ENCODE measurements at regions of chr5 and their contacts with region 1.

Region 1: DNA sequence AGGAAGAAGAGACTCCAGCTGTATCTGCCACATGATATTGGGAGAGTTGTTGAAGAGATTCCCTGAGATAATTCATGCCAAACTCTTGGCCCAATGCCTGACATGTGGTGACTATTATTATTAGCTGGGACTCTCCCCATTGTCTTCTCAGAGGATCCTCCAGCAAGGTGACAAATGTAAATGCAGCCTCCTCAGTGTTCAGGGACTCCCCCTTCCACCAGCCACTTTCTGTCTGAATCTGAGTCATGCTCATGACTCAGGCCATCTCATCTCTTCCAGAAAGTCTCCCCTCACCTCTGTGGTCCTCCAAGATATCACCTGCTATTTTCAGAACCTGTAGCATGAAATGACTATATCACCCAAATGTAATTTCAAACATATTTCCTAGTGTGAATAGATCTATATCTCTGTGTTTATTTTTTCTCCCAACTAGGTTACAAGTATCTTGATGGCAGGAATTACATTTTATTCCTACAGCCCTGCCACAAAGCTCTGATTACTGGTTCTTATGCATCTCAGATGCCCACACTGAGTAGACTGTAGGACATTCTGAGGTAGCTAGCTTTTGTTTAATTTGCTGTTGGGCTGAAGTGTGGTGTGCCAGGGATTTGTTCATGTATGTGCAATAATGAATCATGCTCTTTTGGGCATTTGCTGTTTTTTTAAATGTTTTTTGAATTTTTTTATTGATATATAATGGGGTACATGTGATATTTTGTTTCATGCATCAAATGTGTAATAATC is 126.6 kb upstream of the IL12B start:
- DNase-seq: peak; percentile 82
- ATAC-seq: peak; percentile 84
- H3K4me3 Mint-ChIP-seq: no peak overlapping the region
- H3K27ac Mint-ChIP-seq: no peak overlapping the region
- H3K4me1 Mint-ChIP-seq: peaks cover 45% of the 10 kb centered on the region
- H3K27me3 Mint-ChIP-seq: peaks cover 37% of the 10 kb centered on the region

Region 2: GRCh38 chr5:157858527-157859226 is 1598.2 kb before region 1 on chr5 and contains the start of gene CLINT1:
- CTCF ChIA-PET with region 1: no interaction called
- POLR2A ChIA-PET with region 1: no interaction called
- intact Hi-C with region 1: loop called in 1 of 2 experiments (anchors 5 kb)
- DNase-seq: peak; percentile 94
- ATAC-seq: peak; percentile 81
- H3K4me3 Mint-ChIP-seq: peak within 1 kb of the TSS; percentile 91
- H3K27ac Mint-ChIP-seq: peak within 1 kb of the TSS; percentile 96
- H3K4me1 Mint-ChIP-seq: peaks cover 76% of the 10 kb centered on the region
- H3K27me3 Mint-ChIP-seq: no peaks in the 10 kb centered on the region
- total RNA-seq, gene CLINT1: 59.0 to 69.0 TPM

Region 3: GRCh38 chr5:158875272-158875679 is 581.6 kb before region 1 on chr5:
- CTCF ChIA-PET with region 1: no interaction called
- POLR2A ChIA-PET with region 1: no interaction called
- intact Hi-C with region 1: loop called in 1 of 2 experiments (anchors 5 kb)
- DNase-seq: no peak
- ATAC-seq: peak; percentile 71
- H3K4me3 Mint-ChIP-seq: peak overlapping the region; percentile 13
- H3K27ac Mint-ChIP-seq: no peak overlapping the region
- H3K4me1 Mint-ChIP-seq: peaks cover 27% of the 10 kb centered on the region
- H3K27me3 Mint-ChIP-seq: peaks cover 4% of the 10 kb centered on the region

Region 4: GRCh38 chr5:159240301-159240870 is 216.5 kb before region 1 on chr5:
- CTCF ChIA-PET with region 1: no interaction called
- POLR2A ChIA-PET with region 1: no interaction called
- intact Hi-C with region 1: loop called in 1 of 2 experiments (anchors 1 kb)
- DNase-seq: peak; percentile 25
- ATAC-seq: peak; percentile 84
- H3K4me3 Mint-ChIP-seq: no peak overlapping the region
- H3K27ac Mint-ChIP-seq: peak overlapping the region; percentile 62
- H3K4me1 Mint-ChIP-seq: peaks cover 45% of the 10 kb centered on the region
- H3K27me3 Mint-ChIP-seq: no peaks in the 10 kb centered on the region

Region 5: DNA sequence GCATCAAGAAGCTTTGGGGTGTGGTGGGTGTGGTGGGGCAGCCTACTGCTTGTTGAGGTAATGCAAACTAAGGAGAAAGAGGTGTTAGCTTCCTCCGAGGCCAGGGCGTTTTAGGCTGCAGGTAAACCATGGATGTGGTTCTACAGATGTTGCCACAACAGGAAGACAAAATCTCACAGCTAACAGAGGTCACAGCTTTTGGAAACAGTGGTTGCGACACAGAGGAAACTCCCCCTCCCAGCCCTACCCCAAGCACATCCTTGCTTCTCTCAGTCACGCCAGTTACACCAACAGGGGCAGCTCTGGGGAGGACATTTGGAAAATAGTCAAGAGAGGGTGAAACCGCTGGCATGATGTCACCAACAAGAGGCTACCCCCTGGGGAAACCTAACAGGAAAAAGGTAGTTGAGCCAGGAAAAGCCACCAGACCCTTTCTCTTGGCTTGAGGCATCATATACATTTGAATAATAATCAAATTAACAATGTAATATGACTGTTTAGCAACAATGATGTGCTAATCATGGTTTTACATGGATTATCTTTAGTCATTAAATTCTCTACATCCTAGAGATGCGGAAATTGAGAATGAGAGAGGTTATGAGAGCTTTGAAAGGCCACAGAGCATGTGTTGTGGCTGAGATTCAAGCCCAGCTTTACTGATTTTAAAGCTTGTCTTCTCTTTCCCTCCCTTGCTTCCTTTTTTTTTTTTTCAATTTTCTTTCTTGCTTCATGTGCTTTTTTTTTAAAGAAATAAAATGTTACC is 44.4 kb before region 1 on chr5:
- CTCF ChIA-PET with region 1: interaction called, 4 read pairs
- POLR2A ChIA-PET with region 1: interaction called, 6 read pairs
- intact Hi-C with region 1: loop called (anchors 1 kb)
- DNase-seq: peak; percentile 75
- ATAC-seq: peak; percentile 82
- H3K4me3 Mint-ChIP-seq: no peak overlapping the region
- H3K27ac Mint-ChIP-seq: no peak overlapping the region
- H3K4me1 Mint-ChIP-seq: peaks cover 47% of the 10 kb centered on the region
- H3K27me3 Mint-ChIP-seq: peaks cover 6% of the 10 kb centered on the region

Region 6: DNA sequence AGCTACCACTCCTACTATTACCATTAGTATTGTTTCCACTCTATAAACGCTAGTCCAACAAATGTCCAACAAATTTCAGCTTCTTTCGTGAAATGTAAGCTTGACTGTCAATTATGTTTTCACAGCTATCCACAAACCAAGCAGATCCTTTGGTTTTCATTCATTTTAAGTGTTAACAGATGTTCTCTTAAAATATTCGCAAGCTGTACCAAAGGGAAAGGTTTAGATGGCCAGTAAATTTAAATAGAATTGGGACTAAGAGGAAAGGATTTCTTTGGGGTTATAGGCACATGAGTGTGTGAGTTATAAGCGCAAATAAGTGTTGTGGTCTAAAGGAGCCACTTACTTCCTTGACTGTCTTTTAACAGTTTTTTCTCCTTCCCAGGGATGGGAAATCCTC is 322.6 kb after region 1 on chr5:
- CTCF ChIA-PET with region 1: no interaction called
- POLR2A ChIA-PET with region 1: no interaction called
- intact Hi-C with region 1: loop called (anchors 1 to 2 kb)
- DNase-seq: no peak
- ATAC-seq: no peak
- H3K4me3 Mint-ChIP-seq: no peak overlapping the region
- H3K27ac Mint-ChIP-seq: no peak overlapping the region
- H3K4me1 Mint-ChIP-seq: peaks cover 23% of the 10 kb centered on the region
- H3K27me3 Mint-ChIP-seq: peaks cover 44% of the 10 kb centered on the region